ENCODE measurements at regions of chr18 and their contacts with region 1.

Region 1: DNA sequence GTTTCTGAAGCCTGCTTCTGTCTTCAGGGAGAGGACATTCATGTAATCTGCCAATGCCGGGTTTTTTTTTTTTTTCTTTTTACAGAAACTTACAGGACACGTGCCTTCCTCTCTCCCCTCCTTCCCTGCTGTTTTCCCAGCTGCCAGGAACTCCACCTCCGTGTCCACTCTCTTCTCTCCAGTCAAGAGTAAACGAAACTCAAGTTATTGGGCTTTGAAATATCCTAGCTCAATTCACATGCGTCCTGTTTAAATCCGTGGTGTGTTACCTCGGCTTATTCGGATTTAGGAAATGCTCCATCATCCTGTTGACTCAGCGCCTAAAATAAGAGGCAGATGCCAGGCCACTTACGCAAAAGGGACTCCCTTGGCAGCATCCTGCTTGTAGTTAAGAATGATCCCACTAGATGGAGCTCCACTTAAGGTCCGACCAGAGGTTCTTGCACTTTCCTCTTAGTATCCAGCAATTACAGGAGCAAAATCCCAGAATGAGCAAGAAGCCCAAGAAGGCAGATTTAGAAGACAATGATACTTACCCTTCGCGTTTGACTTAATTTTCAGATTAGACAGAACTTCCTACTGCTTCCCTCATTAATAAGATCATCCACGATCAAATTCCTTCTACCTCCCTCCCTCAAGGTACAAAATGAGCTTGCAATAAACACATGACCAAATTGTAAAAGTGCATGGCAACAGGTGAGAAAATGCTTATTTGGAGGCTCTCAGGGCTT is 97.2 kb upstream of the ZCCHC2 start:
- H3K4me3 Mint-ChIP-seq: peak overlapping the region; percentile 69
- H3K27ac Mint-ChIP-seq: peak overlapping the region; percentile 73
- H3K4me1 Mint-ChIP-seq: peaks cover 40% of the 10 kb centered on the region
- H3K27me3 Mint-ChIP-seq: no peaks in the 10 kb centered on the region

Region 2: DNA sequence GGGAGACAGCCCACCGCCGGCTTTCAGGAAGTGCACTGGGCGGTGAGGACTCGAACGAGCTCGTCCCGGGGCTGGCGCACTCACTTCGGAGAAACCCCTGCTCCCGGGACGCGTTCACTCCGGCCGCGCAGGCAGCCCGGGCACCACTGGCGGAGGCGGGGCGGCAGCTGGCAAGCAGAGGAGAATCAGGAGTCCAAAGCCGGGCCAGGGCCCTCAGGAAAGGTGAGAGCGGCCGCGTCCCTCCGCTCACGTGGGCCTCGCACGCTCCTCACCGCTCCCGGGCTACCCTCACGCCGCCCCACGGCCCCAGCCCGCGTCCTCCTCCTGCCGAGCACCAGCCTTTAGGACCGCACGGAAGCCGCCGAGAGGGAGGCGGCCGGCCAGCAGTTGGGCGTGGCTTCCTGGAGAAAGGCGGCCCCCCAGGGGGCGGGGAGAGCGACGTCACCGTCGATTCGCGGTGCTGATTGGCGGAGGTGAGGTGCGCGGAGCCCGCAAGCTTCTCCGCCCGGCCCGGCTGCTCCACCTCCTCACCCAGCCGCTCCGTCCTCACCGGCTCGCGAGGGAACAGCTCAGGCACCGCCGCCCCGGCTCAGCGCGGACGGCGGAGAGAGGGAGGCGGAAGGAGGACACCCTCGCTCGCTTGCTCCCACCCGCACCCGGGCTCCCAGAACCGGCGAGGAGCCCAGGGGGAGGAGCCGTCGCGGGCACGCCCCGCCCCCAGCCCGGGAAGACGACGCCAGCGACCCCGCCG is 97.0 kb after region 1 on chr18 and contains the start of gene ZCCHC2:
- intact Hi-C with region 1: loop called (anchors 5 kb)
- H3K4me3 Mint-ChIP-seq: peak within 1 kb of the TSS; percentile 91
- H3K27ac Mint-ChIP-seq: peak within 1 kb of the TSS; percentile 89
- H3K4me1 Mint-ChIP-seq: peaks cover 33% of the 10 kb centered on the region
- H3K27me3 Mint-ChIP-seq: peaks cover 5% of the 10 kb centered on the region

Region 3: GRCh38 chr18:62566199-62566598 is 140.6 kb after region 1 on chr18:
- intact Hi-C with region 1: loop called (anchors 5 kb)
- H3K4me3 Mint-ChIP-seq: no peak overlapping the region
- H3K27ac Mint-ChIP-seq: no peak overlapping the region
- H3K4me1 Mint-ChIP-seq: peaks cover 6% of the 10 kb centered on the region
- H3K27me3 Mint-ChIP-seq: no peaks in the 10 kb centered on the region

Region 4: GRCh38 chr18:62584241-62585120 is 158.9 kb after region 1 on chr18:
- intact Hi-C with region 1: loop called (anchors 1 kb)
- H3K4me3 Mint-ChIP-seq: peak overlapping the region; percentile 40
- H3K27ac Mint-ChIP-seq: peak overlapping the region; percentile 68
- H3K4me1 Mint-ChIP-seq: peaks cover 44% of the 10 kb centered on the region
- H3K27me3 Mint-ChIP-seq: peaks cover 2% of the 10 kb centered on the region

Measured in dendritic cell treated with granulocyte-macrophage colony-stimulating factor and Interleukin-4, amounts not matched to agents 40 ng/mL and 50 ng/mL, for 4 days (primary cell).